ENCODE measurements at regions of chr16 and their contacts with region 1.

Region 1: DNA sequence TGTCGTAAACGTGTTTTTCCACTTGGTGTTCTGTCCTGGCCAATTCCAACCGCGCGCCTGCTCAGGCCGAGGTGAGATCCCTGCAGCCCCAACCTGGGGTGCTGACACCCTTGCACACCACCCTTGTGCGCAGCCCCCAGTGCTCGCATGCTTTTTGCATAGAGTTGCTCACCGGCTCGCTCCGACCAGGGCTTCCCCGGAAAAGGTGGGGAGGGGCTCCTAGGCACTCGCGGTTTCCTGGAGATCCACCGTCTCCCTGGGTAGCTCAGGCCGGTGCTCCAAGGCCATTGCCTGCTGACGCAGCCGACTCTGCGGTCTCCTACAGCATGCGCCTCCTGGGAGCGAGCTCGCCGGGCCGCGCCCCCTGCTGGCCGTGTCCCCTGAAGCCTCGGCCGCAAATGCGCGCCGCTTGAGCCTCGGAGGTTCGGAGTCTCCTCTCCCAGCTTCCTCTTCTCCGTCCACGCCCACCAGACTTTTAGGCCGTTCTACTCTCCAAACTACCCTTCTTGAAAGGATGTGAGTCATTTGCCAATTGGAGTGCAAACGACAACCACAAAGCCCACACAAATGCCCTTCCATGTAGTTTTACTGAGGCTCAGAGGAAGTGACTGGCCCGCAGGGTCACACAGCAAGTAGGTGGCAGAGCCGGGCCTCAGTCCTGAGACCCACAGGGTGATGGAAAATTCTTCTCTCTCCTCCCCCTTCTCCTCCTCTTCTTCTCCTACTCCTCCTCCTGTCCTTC is 7.2 kb upstream of the PDP2 start:
- DNase-seq: peak; percentile 90 to 94 (median 92)
- H3K4me3 ChIP-seq: peak overlapping the region; percentile 23
- H3K27ac ChIP-seq: peak overlapping the region; percentile 60 to 67
- H3K4me1 ChIP-seq: peaks cover 3% of the 10 kb centered on the region
- H3K27me3 ChIP-seq: no peaks in the 10 kb centered on the region
- CTCF ChIP-seq: peak; percentile 83 to 93 (median 88)
- EP300 ChIP-seq: no peak
- POLR2A ChIP-seq: no peak

Region 2: GRCh38 chr16:66728117-66728787 is 144.9 kb before region 1 on chr16:
- intact Hi-C with region 1: loop called in 2 of 4 experiments (anchors 5 to 10 kb)
- DNase-seq: peak in 3 of 5 donors; percentile 37 to 45 (median 44)
- H3K4me3 ChIP-seq: no peak overlapping the region
- H3K27ac ChIP-seq: peak overlapping the region in 1 of 2 donors; percentile 21
- H3K4me1 ChIP-seq: no peaks in the 10 kb centered on the region
- H3K27me3 ChIP-seq: no peaks in the 10 kb centered on the region
- CTCF ChIP-seq: peak in 2 of 3 donors; percentile 63 to 67
- EP300 ChIP-seq: no peak
- POLR2A ChIP-seq: no peak

Region 3: DNA sequence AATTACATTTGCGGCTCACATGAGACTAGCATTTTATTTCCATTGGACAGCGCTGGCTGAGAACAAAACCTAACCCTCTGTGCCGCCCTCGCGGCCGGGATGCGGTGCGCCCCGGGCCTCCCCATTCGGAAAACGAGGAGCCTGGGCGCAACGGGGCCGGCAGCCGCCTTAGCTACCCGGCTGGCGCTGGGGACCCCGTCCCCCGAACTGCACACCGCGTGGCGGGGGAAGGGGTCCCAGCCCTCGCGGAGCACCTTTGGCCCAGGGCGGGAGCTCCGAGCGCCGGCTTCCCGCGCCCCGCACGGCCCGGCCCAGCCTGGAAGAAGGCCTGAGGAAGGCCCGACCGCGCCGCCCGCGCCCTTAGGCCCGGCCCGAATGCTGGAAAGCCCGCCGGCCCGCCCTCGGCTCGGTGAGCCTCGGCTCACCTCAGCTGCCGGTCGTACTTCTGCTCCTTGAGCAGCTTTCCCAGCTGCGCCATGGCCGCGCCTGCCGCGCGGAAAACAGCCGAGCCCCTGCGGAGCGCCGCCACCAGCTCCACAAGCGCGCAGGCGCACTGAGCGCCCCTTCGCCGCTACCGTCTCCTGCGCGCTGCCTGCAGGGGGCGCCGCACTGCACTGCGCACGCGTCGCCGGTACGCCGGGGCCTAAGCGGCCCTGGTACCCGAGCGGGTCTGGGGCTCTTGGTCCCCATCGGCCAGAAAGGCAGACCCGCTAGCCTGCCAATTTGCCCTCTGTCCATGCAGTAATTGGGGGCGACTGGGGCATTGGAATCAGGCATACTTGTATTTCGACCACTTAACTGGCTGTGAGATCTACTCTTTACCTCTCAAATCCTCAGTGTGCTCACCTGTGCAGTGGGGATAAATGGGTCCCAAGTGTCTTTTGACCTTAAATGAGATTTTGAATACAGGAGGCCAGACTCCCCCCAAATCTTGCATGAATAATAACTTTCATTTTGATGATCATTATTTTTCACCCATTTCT is 42.4 kb before region 1 on chr16 and contains the start of gene NAE1:
- intact Hi-C with region 1: loop called in 1 of 4 experiments (anchors 2 kb)
- DNase-seq: peak; percentile 82 to 94 (median 87)
- H3K4me3 ChIP-seq: peak within 1 kb of the TSS; percentile 90
- H3K27ac ChIP-seq: peak within 1 kb of the TSS; percentile 82 to 84
- H3K4me1 ChIP-seq: peaks cover 5% of the 10 kb centered on the region
- H3K27me3 ChIP-seq: no peaks in the 10 kb centered on the region
- CTCF ChIP-seq: peak; percentile 94 to 98 (median 97)
- EP300 ChIP-seq: no peak
- POLR2A ChIP-seq: peak; percentile 88
- total RNA-seq, gene NAE1: 38.3 to 63.7 (median 54.0) TPM

Region 4: GRCh38 chr16:66934153-66934838 is 61.2 kb after region 1 on chr16 and contains the start of gene CIAO2B:
- intact Hi-C with region 1: no loop called
- DNase-seq: peak; percentile 86 to 94 (median 90)
- H3K4me3 ChIP-seq: peak within 1 kb of the TSS; percentile 99
- H3K27ac ChIP-seq: peak within 1 kb of the TSS; percentile 43 to 87
- H3K4me1 ChIP-seq: peaks cover 14% of the 10 kb centered on the region
- H3K27me3 ChIP-seq: no peaks in the 10 kb centered on the region
- CTCF ChIP-seq: peak in 1 of 3 donors; percentile 5
- EP300 ChIP-seq: no peak
- POLR2A ChIP-seq: peak; percentile 91
- total RNA-seq, gene CIAO2B: 57.7 to 77.8 (median 66.7) TPM